Endothelial cell of umbilical vein (primary cell): ENCODE measurements at regions of chr20 and their contacts with region 1.

Region 1: GRCh38 chr20:24992487-24993205 is at the start of gene APMAP:
- DNase-seq: peak; percentile 90
- H3K4me3 ChIP-seq: peak within 1 kb of the TSS; percentile 33 to 66 (median 58)
- H3K27ac ChIP-seq: peak within 1 kb of the TSS; percentile 73
- H3K4me1 ChIP-seq: peaks cover 19% of the 10 kb centered on the region
- H3K27me3 ChIP-seq: peaks cover 0 to 2% of the 10 kb centered on the region in 2 experiments
- CTCF ChIP-seq: no peak
- POLR2A ChIP-seq: peak; percentile 96
- total RNA-seq, gene APMAP: 105 and 110 TPM in 2 replicates

Region 2: GRCh38 chr20:25035921-25036320 is 43.3 kb after region 1 on chr20:
- CTCF ChIA-PET with region 1: interaction called, 3 read pairs
- POLR2A ChIA-PET with region 1: no interaction called
- dilution Hi-C with region 1: no loop called
- intact Hi-C with region 1: loop called (anchors 2 kb)
- DNase-seq: no peak
- H3K4me3 ChIP-seq: no peak overlapping the region
- H3K27ac ChIP-seq: no peak overlapping the region
- H3K4me1 ChIP-seq: peaks cover 12% of the 10 kb centered on the region
- H3K27me3 ChIP-seq: no peaks in the 10 kb centered on the region
- CTCF ChIP-seq: no peak
- POLR2A ChIP-seq: no peak

Region 3: DNA sequence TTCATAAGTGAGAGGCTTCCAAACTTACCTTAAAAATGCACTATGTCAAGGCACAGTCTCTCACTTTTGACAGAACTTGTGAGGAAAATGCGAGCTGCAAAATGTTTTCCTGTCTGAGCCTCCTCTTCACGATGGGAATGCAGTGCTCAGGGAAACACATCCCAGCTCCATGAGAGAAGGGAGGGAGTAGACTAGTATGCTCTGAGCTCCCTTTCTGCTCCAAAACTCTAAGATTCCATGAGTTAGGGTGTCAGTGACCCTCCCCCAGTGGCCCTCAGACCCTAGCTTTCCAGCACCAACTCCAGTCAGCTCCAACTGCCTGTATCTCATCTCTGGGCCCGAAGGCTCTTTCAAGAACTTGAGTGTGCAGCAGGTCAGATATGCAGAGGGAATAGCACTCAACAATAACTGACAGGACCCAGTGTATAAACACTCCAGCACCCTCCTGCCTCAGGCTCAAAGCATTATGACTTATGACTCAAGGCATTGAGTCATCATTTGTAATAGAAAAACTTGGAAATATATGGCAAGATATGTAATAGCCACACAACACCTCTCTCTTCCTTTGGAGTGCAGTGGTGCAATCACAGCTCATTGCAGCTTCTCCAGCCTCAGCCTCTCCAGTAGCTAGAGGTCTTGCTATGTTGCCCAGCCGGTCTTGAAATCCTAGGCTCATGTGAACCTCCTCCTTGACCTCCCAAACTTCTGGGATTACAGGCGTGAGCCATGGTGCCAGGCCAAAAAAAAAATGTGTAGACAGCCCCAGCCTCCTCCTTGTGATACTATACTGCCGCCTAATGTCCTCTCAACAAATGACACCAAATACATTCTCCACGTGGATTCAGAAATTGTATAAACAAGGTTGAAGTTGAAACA is 186.2 kb after region 1 on chr20:
- CTCF ChIA-PET with region 1: interaction called, 8 read pairs
- POLR2A ChIA-PET with region 1: no interaction called
- dilution Hi-C with region 1: no loop called
- intact Hi-C with region 1: loop called (anchors 1 kb)
- DNase-seq: peak; percentile 65
- H3K4me3 ChIP-seq: no peak overlapping the region
- H3K27ac ChIP-seq: no peak overlapping the region
- H3K4me1 ChIP-seq: peaks cover 2% of the 10 kb centered on the region
- H3K27me3 ChIP-seq: peaks cover 0 to 2% of the 10 kb centered on the region in 2 experiments
- CTCF ChIP-seq: peak; percentile 46 to 55
- POLR2A ChIP-seq: no peak

Region 4: GRCh38 chr20:25247956-25248785 is 255.5 kb after region 1 on chr20 and contains the start of gene PYGB:
- CTCF ChIA-PET with region 1: interaction called, 6 read pairs
- POLR2A ChIA-PET with region 1: no interaction called
- dilution Hi-C with region 1: no loop called
- intact Hi-C with region 1: loop called (anchors 1 kb)
- DNase-seq: peak; percentile 88
- H3K4me3 ChIP-seq: peak within 1 kb of the TSS; percentile 71 to 84 (median 77)
- H3K27ac ChIP-seq: peak within 1 kb of the TSS; percentile 59
- H3K4me1 ChIP-seq: peaks cover 11% of the 10 kb centered on the region
- H3K27me3 ChIP-seq: no peaks in the 10 kb centered on the region
- CTCF ChIP-seq: no peak
- POLR2A ChIP-seq: peak; percentile 94
- total RNA-seq, gene PYGB: 57.2 and 60.2 TPM in 2 replicates

Region 5: DNA sequence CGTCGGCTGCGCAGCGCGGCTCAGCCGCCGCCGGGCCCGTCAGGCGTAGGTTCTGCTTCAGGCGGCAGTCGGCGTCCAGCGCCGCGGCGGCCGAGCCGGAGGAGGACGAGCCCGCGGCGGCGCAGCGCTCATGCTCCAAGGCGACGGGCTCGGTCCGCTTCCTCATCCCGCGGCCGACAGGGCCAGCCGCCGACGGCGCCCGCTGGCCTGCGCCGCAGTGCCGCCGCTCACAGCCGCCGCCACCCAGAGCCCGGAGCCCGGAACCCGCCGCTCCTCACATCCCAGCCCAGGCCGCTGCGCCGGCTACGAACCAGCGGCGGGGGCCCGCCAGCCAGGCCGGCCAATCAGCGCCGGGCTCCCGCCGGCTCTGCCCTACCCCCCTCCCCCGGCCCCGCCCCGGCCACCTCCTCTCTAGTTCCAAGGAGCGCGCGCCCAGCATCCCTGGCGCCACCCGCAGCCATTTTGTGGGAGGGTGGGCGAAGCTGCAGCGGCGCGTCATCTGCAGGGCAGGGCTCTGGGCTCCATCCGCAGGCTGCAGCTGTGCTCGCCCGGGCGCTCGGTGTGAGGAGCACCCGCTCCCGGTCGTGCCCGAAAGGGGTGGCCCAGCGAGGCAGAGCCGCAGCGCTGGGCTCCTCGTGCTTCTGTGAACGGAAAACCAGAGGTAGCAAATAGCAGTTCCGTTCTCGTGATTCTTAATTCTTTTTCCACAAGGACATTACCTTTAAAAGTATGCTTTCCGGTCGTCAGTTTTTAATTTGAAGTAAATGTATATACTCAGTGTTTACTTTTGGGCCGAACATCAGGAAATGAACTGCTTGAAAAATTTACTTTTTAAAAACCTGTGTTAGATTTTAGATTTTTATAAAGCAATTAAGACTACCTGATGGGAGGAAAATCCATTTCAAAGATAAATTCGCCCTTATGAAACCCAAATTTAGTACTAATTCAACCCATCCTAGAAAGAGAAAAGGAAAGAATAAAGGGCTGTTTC is 398.2 kb after region 1 on chr20 and contains the start of gene ABHD12:
- CTCF ChIA-PET with region 1: interaction called, 3 read pairs
- POLR2A ChIA-PET with region 1: no interaction called
- dilution Hi-C with region 1: no loop called
- intact Hi-C with region 1: loop called (anchors 2 kb)
- DNase-seq: peak; percentile 96
- H3K4me3 ChIP-seq: peak within 1 kb of the TSS; percentile 79 to 81 (median 80)
- H3K27ac ChIP-seq: peak within 1 kb of the TSS; percentile 76
- H3K4me1 ChIP-seq: peaks cover 9% of the 10 kb centered on the region
- H3K27me3 ChIP-seq: peaks cover 0 to 1% of the 10 kb centered on the region in 2 experiments
- CTCF ChIP-seq: no peak
- POLR2A ChIP-seq: peak; percentile 93
- total RNA-seq, gene ABHD12: 36.0 and 39.6 TPM in 2 replicates

Region 6: DNA sequence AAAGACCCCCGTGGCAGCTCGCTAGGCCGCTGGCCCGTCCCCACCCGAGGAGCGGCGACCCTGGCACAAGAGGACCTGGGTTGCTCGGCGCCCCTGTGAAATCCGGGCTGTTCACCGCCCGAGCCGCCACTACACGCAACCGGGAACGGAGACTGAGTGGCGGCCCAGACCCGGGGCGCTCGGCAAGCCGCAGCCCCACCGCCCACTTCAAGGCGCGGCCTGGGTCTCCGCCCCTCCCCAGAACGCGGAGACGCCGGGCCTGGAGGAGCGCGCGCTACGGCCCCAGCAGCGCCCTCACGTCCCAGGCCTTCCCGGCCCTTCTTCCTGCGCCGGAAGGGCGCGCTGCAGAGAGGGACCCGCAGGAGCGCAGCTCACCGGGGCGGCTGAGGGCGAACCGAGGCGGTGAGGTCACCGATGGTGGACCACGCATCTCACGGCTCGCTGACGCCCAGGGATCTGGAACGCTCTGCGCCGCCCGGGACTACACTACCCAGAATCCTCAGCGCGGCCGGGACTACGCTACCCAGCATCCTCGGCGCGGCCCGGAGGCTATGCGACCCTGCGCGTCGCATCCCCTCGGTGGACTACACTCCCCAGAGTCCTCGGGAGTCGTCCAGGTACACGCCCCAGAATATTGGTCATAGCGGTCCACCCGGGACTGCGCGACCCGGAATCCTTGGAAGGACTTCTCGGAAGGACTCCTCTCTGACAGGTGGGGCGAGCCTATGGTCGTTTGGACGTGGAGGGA is 703.9 kb after region 1 on chr20 and contains the start of gene ZNF337:
- CTCF ChIA-PET with region 1: no interaction called
- POLR2A ChIA-PET with region 1: no interaction called
- dilution Hi-C with region 1: no loop called
- intact Hi-C with region 1: loop called (anchors 1 kb)
- DNase-seq: peak; percentile 96
- H3K4me3 ChIP-seq: peak within 1 kb of the TSS; percentile 83 to 89 (median 84)
- H3K27ac ChIP-seq: peak within 1 kb of the TSS; percentile 64
- H3K4me1 ChIP-seq: peaks cover 5% of the 10 kb centered on the region
- H3K27me3 ChIP-seq: no peaks in the 10 kb centered on the region
- CTCF ChIP-seq: peak in 1 of 2 donors; percentile 4
- POLR2A ChIP-seq: peak; percentile 85
- total RNA-seq, gene ZNF337: 12.9 and 16.7 TPM in 2 replicates